Activated T-helper 1 cell treated with anti-CD3 and anti-CD28 coated beads, Interleukin-12 subunit alpha, Interleukin-12 subunit beta, Interleukin-2, Interleukin-4 antibody, amounts not matched to agents 30 ng/mL and 10 ng/mL and 1 ng/mL, durations not matched to agents 14 hours and 24 hours and 36 hours (primary cell): ENCODE measurements at regions of chr19 and their contacts with region 1.

Region 1: GRCh38 chr19:4246767-4247593 is at the start of gene YJU2:
- DNase-seq: peak; percentile 99
- H3K4me3 Mint-ChIP-seq: peak within 1 kb of the TSS; percentile 96
- H3K27ac Mint-ChIP-seq: peak within 1 kb of the TSS; percentile 100
- H3K4me1 Mint-ChIP-seq: peaks cover 11% of the 10 kb centered on the region
- H3K27me3 Mint-ChIP-seq: no peaks in the 10 kb centered on the region
- total RNA-seq, gene YJU2: 36.8 and 40.6 TPM in 2 replicates

Region 2: GRCh38 chr19:4007021-4007835 is 239.8 kb before region 1 on chr19 and contains the start of gene PIAS4:
- intact Hi-C with region 1: loop called (anchors 1 kb)
- DNase-seq: peak; percentile 94
- H3K4me3 Mint-ChIP-seq: peak within 1 kb of the TSS; percentile 90
- H3K27ac Mint-ChIP-seq: peak within 1 kb of the TSS; percentile 84
- H3K4me1 Mint-ChIP-seq: peaks cover 18% of the 10 kb centered on the region
- H3K27me3 Mint-ChIP-seq: no peaks in the 10 kb centered on the region
- total RNA-seq, gene PIAS4: 37.6 and 41.0 TPM in 2 replicates

Region 3: GRCh38 chr19:4182084-4182810 is 64.7 kb before region 1 on chr19 and contains the starts of genes ANKRD24 and SIRT6:
- intact Hi-C with region 1: loop called (anchors 2 kb)
- DNase-seq: peak; percentile 96
- H3K4me3 Mint-ChIP-seq: peak within 1 kb of the TSS; percentile 98
- H3K27ac Mint-ChIP-seq: peak within 1 kb of the TSS; percentile 94
- H3K4me1 Mint-ChIP-seq: peaks cover 45% of the 10 kb centered on the region
- H3K27me3 Mint-ChIP-seq: peaks cover 8% of the 10 kb centered on the region
- total RNA-seq, gene ANKRD24: 0.49 and 0.54 TPM in 2 replicates
- total RNA-seq, gene SIRT6: 42.6 and 46.4 TPM in 2 replicates

Region 4: GRCh38 chr19:4217429-4218264 is 29.3 kb before region 1 on chr19:
- intact Hi-C with region 1: no loop called
- DNase-seq: no peak
- H3K4me3 Mint-ChIP-seq: no peak overlapping the region
- H3K27ac Mint-ChIP-seq: no peak overlapping the region
- H3K4me1 Mint-ChIP-seq: peaks cover 6% of the 10 kb centered on the region
- H3K27me3 Mint-ChIP-seq: no peaks in the 10 kb centered on the region

Region 5: DNA sequence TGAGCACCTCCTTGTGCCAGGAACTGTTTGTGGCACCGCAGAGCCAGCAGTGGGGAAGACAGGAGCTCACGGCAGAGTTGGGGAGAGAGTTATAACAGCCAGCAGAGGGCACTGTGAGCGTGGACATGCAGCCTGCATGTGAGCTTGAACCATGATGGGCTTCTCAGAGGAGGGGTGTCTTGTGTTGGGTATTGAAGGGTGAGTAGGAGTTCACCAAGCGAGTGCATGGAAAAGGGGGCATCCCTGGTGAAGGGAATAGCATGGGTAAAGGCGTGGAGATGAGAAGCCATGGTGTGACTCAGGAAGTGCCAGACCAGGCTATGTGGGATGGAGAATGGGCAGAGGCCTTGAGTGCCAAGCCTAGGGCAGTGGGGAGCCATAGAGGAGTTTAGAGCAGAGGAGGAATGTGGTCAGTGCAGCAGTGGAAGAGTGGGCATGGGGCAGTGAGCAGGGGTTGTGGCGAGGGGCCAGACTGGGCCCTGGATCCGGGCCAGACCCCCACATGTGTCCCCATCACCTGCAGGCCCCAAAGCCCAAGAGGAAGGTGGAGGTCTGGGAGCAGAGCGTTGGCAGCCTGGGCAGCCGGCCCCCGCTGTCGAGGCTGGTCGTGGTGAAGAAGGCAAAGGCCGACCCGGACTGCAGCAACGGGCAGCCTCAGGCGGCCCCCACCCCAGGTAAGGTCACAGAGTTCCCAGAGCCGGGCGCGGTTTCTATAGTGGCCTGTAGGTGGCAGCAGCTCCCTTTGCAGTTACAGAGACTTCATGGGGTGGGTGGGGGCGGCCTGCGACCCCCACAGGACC is 20.3 kb after region 1 on chr19:
- intact Hi-C with region 1: loop called (anchors 2 kb)
- DNase-seq: peak; percentile 40
- H3K4me3 Mint-ChIP-seq: no peak overlapping the region
- H3K27ac Mint-ChIP-seq: peak overlapping the region; percentile 9
- H3K4me1 Mint-ChIP-seq: peaks cover 17% of the 10 kb centered on the region
- H3K27me3 Mint-ChIP-seq: no peaks in the 10 kb centered on the region

Region 6: DNA sequence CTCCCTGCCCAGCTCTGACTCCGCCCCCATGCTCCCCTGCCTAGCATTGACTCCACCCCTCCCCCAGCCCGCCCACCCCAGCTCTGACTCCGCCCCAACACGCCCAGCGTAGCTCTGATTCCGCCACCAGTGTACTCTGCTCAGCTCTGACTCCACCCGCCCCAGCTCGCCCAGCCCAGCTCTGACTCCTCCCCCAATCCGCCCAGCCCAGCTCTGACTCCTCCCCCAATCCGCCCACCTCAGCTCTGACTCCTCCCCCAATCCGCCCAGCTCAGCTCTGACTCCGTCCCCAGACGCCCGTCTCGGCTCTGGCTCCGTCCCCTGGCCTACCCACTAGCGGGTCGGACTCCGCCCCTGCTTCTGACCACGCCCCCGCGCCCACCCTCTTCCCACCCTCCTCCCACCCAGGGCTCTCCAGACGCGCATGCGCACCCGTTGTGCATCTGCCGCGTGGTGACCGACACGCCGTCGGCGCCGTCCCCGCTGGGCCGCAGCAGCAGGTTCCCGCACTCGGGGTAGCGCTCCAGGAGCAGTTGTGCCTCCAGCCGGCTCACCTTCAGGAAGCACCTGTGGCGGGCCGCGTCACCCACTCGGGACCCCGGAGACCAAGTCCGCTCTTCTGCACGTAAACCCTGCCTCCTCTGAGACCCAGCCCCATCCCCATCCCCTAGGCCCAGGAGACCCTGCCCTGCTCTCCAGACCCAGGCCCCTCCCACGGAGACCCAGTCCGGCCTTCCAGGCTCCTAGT is 81.4 kb after region 1 on chr19:
- intact Hi-C with region 1: loop called (anchors 1 kb)
- DNase-seq: peak; percentile 87
- H3K4me3 Mint-ChIP-seq: peak overlapping the region; percentile 84
- H3K27ac Mint-ChIP-seq: peak overlapping the region; percentile 90
- H3K4me1 Mint-ChIP-seq: peaks cover 15% of the 10 kb centered on the region
- H3K27me3 Mint-ChIP-seq: peaks cover 9% of the 10 kb centered on the region

Region 7: GRCh38 chr19:4430760-4431159 is 183.8 kb after region 1 on chr19:
- intact Hi-C with region 1: no loop called
- DNase-seq: no peak
- H3K4me3 Mint-ChIP-seq: no peak overlapping the region
- H3K27ac Mint-ChIP-seq: peak overlapping the region; percentile 13
- H3K4me1 Mint-ChIP-seq: peaks cover 4% of the 10 kb centered on the region
- H3K27me3 Mint-ChIP-seq: no peaks in the 10 kb centered on the region

Region 8: DNA sequence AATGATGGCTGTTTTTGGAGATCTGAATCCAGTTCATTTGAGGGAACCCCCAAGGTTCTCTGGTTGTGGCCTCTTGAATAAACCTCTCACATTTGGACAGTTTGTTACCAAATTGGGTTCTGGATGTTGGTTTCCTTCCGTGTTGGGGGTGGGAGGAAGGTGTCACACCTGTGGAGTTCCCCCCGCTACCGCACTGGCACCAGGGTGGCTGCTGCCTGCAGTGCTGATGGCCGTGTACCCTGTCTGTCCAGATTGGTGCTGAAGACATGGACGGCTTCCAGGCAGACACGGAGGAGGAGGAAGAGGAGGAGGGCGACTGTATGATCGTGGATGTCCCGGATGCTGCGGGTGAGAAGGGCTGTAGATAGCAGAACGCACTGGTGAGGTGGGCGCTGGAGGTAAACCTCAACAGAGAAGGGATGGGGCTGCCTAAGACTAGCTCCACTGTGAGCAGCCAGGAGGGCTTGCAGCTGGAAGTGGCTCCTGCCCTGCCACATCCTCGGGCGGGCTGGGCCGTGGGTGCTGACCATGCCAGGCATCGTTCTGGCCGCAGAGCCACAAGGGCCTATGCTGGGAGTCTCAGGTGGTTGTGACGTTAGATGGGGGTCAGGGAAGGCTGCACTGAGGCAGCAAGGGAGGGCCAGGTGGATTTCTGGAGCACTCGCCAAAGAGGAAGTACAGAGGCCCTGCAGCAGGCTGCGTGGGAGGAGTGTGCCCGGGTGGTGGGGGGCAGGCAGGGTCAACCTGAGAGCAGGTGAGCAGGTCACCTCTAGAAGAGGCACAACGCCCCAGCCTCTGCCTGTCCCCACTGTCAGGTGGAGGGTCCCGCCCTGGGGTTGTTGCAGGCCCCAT is 195.2 kb after region 1 on chr19:
- intact Hi-C with region 1: no loop called
- DNase-seq: no peak
- H3K4me3 Mint-ChIP-seq: no peak overlapping the region
- H3K27ac Mint-ChIP-seq: peak overlapping the region; percentile 55
- H3K4me1 Mint-ChIP-seq: peaks cover 6% of the 10 kb centered on the region
- H3K27me3 Mint-ChIP-seq: no peaks in the 10 kb centered on the region

Region 9: DNA sequence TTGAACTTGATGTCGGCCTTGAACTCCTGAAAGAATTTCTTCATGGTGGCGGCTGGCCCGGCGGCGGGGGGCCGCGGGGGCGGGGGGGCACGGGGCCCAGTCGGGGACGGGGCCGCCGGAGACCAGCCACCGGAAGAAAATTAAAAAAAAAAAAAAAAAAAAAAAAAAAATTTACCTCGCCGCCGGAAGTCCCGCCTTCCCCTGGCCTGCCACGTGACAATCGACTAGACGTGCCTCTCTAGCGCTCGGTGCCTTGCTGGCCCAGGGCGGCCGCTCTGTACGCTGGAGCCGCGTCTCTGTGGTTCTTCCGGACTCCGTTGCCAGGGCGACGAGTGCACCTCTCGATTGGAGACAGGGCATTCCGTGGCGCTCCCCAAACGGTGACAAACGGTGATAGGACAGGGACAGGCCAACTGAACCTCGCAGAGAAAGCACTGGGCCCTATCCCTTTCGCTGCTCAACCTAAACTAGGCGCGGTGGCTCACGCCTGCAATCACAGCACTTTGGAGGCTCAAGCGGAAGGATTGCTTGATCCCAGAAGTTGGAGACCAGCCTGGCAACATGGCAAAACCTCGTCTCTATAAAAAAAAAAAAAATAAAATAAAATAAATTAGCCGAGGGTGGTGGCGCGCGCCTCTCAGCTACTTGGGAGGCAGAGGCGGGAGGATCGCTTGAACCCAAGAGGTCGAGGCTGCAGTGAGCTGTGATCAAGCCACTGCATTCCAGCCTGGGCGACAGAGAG is 210.8 kb after region 1 on chr19 and contains the start of gene UBXN6:
- intact Hi-C with region 1: loop called (anchors 1 kb)
- DNase-seq: peak; percentile 98
- H3K4me3 Mint-ChIP-seq: peak within 1 kb of the TSS; percentile 92
- H3K27ac Mint-ChIP-seq: peak within 1 kb of the TSS; percentile 94
- H3K4me1 Mint-ChIP-seq: peaks cover 11% of the 10 kb centered on the region
- H3K27me3 Mint-ChIP-seq: peaks cover 2% of the 10 kb centered on the region
- total RNA-seq, gene UBXN6: 49.5 and 51.0 TPM in 2 replicates